Cardiac septum (tissue), 1 donor: ENCODE measurements at regions of chr11 and their contacts with region 1.

Region 1: GRCh38 chr11:69296890-69297786 is 3.2 kb downstream of the MYEOV start:
- DNase-seq: peak; percentile 95

Region 2: GRCh38 chr11:69122642-69123431 is 174.3 kb before region 1 on chr11:
- intact Hi-C with region 1: loop called (anchors 5 kb)
- DNase-seq: no peak

Region 3: GRCh38 chr11:69443138-69443967 is 146.2 kb after region 1 on chr11:
- intact Hi-C with region 1: loop called (anchors 2 kb)
- DNase-seq: peak; percentile 97

Region 4: DNA sequence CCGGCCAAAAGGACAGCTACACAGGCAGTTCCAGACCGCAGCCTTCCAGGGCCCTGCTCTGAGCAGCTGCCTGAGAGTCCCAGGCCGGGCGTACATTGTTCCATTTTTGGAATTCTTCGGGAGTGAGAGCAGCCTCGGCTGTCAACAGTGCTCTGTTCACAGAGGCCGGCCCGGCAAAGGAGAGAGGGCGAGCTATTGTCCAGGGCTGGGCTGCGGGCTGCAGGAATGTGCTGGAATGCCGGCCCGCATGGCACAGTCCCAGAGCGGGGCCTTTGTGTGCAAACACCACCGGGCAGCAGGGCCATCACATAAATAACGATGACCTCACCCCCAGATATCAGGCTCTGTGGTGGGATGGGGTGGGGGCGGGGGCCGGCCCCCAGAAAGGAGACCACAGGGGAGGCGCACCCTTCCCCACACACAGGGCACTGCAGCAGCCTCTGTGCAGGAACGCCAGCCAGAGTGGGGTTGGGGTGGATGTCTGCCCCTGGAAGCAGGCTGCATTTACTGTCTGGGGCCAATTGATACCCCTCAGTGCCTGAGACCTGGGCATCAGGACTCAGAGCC is 200.2 kb after region 1 on chr11:
- intact Hi-C with region 1: loop called (anchors 5 kb)
- DNase-seq: peak; percentile 90